Left ventricle myocardium inferior (tissue), 1 donor: ENCODE measurements at regions of chr11 and their contacts with region 1.

Region 1: DNA sequence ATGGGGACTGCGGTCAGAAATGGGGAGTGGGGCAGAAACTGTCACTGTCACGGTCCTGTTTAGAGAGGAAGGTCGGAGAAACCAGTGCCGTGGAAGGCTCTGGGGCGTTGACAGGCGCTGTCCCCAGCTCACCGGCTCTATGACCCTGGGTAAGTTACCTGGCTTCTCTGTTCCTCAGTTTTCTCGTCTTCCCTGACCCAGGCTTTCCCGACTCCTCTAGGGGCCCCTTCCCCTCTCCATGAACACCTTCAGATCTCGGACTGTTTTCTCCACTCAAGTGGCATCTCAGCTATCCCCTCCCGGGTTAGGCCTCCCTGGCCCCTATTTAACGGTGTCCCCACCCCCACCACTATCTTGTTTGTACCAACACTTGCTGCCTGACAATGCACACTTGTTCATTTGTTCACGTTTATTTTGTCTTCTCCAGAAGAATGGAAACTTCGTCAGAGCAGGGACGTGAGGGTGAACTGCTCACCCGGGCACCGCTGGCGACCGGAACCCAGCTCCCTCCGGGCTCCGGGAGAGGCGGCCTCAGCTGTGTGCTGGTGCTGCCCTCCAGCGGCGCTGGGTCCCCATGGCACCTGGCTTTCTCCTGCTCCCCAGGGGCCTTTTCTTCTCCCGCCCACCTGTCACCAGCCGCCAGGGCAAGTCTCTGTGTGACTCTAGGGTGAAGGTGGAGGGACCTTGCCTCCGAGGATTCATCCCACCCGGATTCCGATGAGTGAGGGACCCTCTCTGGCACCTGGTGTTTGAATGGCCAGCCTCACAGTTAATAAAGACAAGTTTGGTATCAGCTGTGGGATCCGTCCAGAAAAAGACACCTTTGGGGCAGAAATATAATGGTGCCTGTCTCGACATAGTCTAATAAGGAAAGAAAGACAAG is 33.1 kb upstream of the SLC35C1 start:
- DNase-seq: peak; percentile 87
- H3K4me3 ChIP-seq: peak overlapping the region; percentile 72
- H3K27ac ChIP-seq: peak overlapping the region; percentile 87
- H3K4me1 ChIP-seq: peaks cover 17% of the 10 kb centered on the region
- H3K27me3 ChIP-seq: no peaks in the 10 kb centered on the region
- CTCF ChIP-seq: peak; percentile 95

Region 2: GRCh38 chr11:45371251-45372115 is 400.3 kb before region 1 on chr11:
- intact Hi-C with region 1: loop called (anchors 10 kb)
- DNase-seq: peak; percentile 57
- H3K4me3 ChIP-seq: peak overlapping the region; percentile 32
- H3K27ac ChIP-seq: no peak overlapping the region
- H3K4me1 ChIP-seq: peaks cover 9% of the 10 kb centered on the region
- H3K27me3 ChIP-seq: peaks cover 38% of the 10 kb centered on the region
- CTCF ChIP-seq: peak; percentile 94

Region 3: GRCh38 chr11:45405916-45406670 is 365.7 kb before region 1 on chr11:
- intact Hi-C with region 1: loop called (anchors 5 kb)
- DNase-seq: no peak
- H3K4me3 ChIP-seq: no peak overlapping the region
- H3K27ac ChIP-seq: no peak overlapping the region
- H3K4me1 ChIP-seq: no peaks in the 10 kb centered on the region
- H3K27me3 ChIP-seq: peaks cover 62% of the 10 kb centered on the region
- CTCF ChIP-seq: peak; percentile 61